HepG2 (cell line): ENCODE measurements at regions of chr12 and their contacts with region 1.

Region 1: DNA sequence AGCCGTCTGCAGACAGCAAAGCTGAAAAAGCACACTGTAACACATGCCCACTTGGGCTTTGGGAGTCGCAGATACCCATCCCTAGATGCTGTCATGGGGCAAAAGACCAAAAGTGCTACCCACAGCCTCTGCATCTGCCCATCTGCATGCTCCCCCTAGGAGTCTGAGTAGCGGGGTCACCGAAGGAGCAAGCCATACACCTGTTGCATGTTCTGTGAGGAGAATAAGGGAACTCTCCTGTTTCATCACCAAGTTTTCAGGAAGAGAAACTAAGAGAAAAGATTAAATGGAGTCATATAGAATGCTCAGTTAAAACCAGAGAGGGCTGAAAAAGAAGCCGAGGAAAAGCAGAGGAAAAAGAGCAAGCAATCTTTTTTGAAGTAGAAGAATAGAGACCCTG is 13.7 kb upstream of the ST8SIA1 start:
- DNase-seq: no peak
- ATAC-seq: no peak
- H3K4me3 ChIP-seq: no peak overlapping the region
- H3K27ac ChIP-seq: no peak overlapping the region
- H3K4me1 ChIP-seq: no peaks in the 10 kb centered on the region
- H3K27me3 ChIP-seq: no peaks in the 10 kb centered on the region
- CTCF ChIP-seq: no peak
- EP300 ChIP-seq: no peak
- POLR2A ChIP-seq: no peak
- RAD21 ChIP-seq: no peak

Region 2: DNA sequence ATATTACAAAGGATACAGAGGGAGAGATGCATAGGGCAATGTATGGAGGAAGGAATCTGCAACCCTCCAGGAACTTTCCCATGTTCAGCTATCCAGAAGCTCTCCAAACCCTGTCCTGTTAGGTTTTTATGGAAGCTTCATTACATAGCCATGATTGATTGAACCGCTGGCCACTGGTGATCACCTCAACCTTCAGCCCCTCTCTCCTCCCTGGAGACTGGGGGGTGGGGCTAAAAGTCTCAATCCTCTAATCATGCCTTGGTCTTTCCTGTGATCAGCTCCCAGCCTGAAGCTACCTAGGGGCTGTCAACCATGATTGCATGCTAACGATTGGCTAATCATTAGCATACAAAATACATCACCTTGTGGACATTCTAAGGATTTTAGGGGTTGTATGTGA is 137.1 kb before region 1 on chr12:
- CTCF ChIA-PET with region 1: no interaction called
- POLR2A ChIA-PET with region 1: no interaction called
- in situ Hi-C with region 1: no loop called
- intact Hi-C with region 1: loop called (anchors 5 kb)
- DNase-seq: no peak
- ATAC-seq: no peak
- H3K4me3 ChIP-seq: no peak overlapping the region
- H3K27ac ChIP-seq: no peak overlapping the region
- H3K4me1 ChIP-seq: no peaks in the 10 kb centered on the region
- H3K27me3 ChIP-seq: no peaks in the 10 kb centered on the region
- CTCF ChIP-seq: no peak
- EP300 ChIP-seq: no peak
- POLR2A ChIP-seq: no peak
- RAD21 ChIP-seq: no peak